ENCODE measurements at regions of chr13 and their contacts with region 1.

Region 1: GRCh38 chr13:68666774-68667397 is 1436.8 kb upstream of the PCDH9 start:
- DNase-seq: no peak
- ATAC-seq: no peak
- H3K4me3 Mint-ChIP-seq: no peak overlapping the region
- H3K27ac Mint-ChIP-seq: no peak overlapping the region
- H3K4me1 Mint-ChIP-seq: no peaks in the 10 kb centered on the region
- H3K27me3 Mint-ChIP-seq: no peaks in the 10 kb centered on the region
- CTCF ChIP-seq: no peak

Region 2: GRCh38 chr13:68697551-68697950 is 30.7 kb after region 1 on chr13:
- CTCF ChIA-PET with region 1: no interaction called
- POLR2A ChIA-PET with region 1: no interaction called
- intact Hi-C with region 1: loop called (anchors 1 kb)
- DNase-seq: no peak
- ATAC-seq: no peak
- H3K4me3 Mint-ChIP-seq: no peak overlapping the region
- H3K27ac Mint-ChIP-seq: no peak overlapping the region
- H3K4me1 Mint-ChIP-seq: no peaks in the 10 kb centered on the region
- H3K27me3 Mint-ChIP-seq: no peaks in the 10 kb centered on the region
- CTCF ChIP-seq: no peak

Region 3: GRCh38 chr13:68850160-68850559 is 183.3 kb after region 1 on chr13:
- CTCF ChIA-PET with region 1: no interaction called
- POLR2A ChIA-PET with region 1: no interaction called
- intact Hi-C with region 1: no loop called
- DNase-seq: no peak
- ATAC-seq: no peak
- H3K4me3 Mint-ChIP-seq: no peak overlapping the region
- H3K27ac Mint-ChIP-seq: no peak overlapping the region
- H3K4me1 Mint-ChIP-seq: no peaks in the 10 kb centered on the region
- H3K27me3 Mint-ChIP-seq: no peaks in the 10 kb centered on the region
- CTCF ChIP-seq: no peak